Left ventricle myocardium superior (tissue), 1 donor: ENCODE measurements at regions of chr7 and their contacts with region 1.

Region 1: GRCh38 chr7:107150375-107151073 is 18.3 kb upstream of the HBP1 start:
- DNase-seq: peak; percentile 75
- ATAC-seq: peak; percentile 67

Region 2: GRCh38 chr7:106793015-106793975 is 357.2 kb before region 1 on chr7:
- intact Hi-C with region 1: loop called (anchors 2 kb)
- DNase-seq: no peak
- ATAC-seq: no peak

Region 3: DNA sequence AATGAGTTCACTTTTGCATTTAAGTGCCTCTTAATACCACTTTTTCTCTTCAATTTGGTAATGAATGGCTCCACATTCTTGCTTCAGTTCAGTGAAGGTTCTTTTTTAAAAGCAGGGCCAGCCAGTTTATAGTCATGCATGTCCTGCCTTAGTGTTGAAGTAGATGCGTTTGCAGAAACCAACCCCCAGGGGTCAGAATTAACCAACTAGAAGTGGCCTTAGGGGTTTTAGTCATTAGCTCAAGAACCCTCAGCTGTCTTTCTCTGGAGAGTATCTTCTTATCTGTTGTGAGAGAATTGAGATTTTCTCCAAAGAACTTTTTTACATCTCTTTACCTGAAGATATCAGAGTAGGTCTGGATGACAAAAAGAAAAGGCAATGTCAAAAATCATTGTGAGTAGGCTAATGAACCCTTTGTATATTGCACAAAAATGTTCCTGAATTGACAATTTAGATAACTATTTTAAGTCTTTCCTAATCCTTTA is 203.2 kb before region 1 on chr7:
- intact Hi-C with region 1: loop called (anchors 1 kb)
- DNase-seq: no peak
- ATAC-seq: peak; percentile 90